ENCODE measurements at regions of chr2 and their contacts with region 1.

Region 1: GRCh38 chr2:10122386-10123280 is at the start of gene RRM2:
- DNase-seq: peak; percentile 95
- ATAC-seq: peak; percentile 79
- H3K4me3 Mint-ChIP-seq: peak within 1 kb of the TSS; percentile 99
- H3K27ac Mint-ChIP-seq: peak within 1 kb of the TSS; percentile 94
- H3K4me1 Mint-ChIP-seq: peaks cover 49% of the 10 kb centered on the region
- H3K27me3 Mint-ChIP-seq: no peaks in the 10 kb centered on the region
- total RNA-seq, gene RRM2: 320 to 355 TPM

Region 2: DNA sequence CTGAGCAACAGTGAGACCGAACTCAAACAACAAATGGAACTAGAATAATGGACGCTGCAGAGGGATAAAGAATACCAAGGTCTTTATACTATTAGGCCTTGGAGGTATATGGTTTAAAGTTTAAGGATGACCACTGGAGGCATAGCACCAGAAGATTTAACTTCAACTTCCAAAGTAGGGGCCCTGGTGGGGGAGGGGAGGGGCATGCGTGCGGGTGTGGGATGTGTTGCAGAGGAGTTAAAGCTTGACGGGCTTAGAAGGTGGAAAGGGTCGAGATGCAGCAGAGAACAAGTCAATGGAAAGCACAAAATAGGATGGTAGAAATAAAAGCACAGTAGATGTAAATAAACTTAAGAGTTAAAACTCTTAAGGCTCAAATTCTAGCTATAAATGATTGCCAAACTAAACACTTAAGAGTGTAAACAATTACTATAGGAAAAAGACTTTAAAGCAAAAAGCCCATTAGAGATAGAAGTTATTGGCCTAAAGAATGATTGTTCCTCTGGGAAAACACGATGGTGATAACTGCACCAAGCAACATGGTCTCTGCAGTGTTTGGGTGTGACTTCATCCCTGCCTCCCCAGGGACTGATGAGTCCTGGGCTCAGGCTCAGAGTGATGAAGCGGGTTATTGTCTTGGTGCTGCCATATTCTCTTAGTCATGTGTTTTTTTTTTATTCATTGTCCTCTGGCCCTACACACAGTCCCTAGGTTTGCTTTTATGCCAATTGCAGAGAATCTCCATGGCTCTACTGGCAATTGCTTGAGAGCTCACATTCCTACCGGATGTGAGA is 12.9 kb after region 1 on chr2:
- POLR2A ChIA-PET with region 1: interaction called, 15 read pairs
- DNase-seq: no peak
- ATAC-seq: no peak
- H3K4me3 Mint-ChIP-seq: no peak overlapping the region
- H3K27ac Mint-ChIP-seq: peak overlapping the region; percentile 50
- H3K4me1 Mint-ChIP-seq: peaks cover 30% of the 10 kb centered on the region
- H3K27me3 Mint-ChIP-seq: no peaks in the 10 kb centered on the region

Region 3: DNA sequence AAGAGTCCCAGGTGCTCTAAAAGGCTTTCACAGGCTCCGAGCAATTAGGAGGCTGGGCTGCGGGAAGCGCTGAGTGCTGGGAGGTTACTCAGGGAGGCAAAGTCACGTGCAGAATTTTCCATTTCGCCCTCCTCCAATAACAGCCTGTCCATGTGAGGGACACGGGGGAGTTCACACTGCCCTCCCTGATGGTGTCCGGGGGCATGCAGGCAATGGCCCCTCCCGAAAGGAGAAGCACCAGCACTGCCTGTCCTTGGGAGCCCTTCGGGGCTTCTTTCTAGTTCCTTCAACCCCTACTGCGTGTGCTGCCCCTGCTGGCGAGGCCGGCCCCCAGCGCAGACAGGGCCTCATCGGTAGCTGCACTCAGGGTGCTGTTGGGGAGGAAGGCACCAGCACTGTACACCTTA is 116.9 kb after region 1 on chr2:
- POLR2A ChIA-PET with region 1: no interaction called
- DNase-seq: no peak
- ATAC-seq: no peak
- H3K4me3 Mint-ChIP-seq: no peak overlapping the region
- H3K27ac Mint-ChIP-seq: no peak overlapping the region
- H3K4me1 Mint-ChIP-seq: peaks cover 3% of the 10 kb centered on the region
- H3K27me3 Mint-ChIP-seq: no peaks in the 10 kb centered on the region

Region 4: DNA sequence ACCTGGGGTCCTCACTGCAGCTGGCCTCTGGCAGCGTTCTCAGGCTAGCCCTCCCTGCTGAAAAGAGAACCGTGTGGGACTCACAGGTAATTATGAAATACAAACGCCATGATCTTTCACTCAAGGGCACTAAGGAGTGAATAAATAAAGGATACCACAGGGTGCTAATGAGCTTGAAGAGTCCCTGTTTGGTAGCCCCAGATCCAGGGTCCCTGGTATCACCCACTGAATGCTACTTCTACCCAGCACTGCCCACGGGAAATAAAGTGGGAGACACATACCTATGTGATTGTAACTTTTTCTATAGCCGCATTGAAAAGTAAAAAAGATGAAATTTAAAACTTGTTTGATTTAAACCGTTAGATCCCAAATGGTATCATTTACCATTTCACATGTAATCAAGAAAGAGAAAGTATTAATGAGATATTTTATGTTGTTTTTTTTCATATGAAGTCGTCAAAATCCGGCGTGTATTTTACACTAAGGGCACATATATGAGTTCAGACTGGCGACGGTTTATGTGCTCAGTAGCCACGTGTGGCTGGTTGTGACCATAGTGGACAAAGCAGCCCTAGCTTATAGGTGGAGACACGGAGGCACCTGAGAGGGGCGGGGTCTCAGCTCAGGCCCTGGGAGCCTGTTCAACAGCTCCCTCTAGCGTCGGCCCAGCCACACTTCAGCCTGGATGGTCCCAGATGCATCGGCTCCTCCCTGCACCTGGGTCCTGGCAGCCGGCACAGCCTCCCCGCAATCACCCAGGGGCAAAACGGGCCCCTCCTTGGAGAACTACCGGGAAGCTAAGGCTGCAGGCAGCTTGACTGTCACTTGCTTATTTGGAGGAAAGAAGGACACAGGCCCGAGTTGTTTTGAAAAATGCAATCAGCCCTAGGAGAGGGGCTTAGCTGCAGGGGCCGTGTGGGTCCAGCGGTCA is 286.3 kb after region 1 on chr2:
- POLR2A ChIA-PET with region 1: interaction called, 13 read pairs
- DNase-seq: peak; percentile 83
- ATAC-seq: peak; percentile 72
- H3K4me3 Mint-ChIP-seq: peak overlapping the region; percentile 86
- H3K27ac Mint-ChIP-seq: peak overlapping the region; percentile 95
- H3K4me1 Mint-ChIP-seq: peaks cover 32% of the 10 kb centered on the region
- H3K27me3 Mint-ChIP-seq: no peaks in the 10 kb centered on the region

Region 5: DNA sequence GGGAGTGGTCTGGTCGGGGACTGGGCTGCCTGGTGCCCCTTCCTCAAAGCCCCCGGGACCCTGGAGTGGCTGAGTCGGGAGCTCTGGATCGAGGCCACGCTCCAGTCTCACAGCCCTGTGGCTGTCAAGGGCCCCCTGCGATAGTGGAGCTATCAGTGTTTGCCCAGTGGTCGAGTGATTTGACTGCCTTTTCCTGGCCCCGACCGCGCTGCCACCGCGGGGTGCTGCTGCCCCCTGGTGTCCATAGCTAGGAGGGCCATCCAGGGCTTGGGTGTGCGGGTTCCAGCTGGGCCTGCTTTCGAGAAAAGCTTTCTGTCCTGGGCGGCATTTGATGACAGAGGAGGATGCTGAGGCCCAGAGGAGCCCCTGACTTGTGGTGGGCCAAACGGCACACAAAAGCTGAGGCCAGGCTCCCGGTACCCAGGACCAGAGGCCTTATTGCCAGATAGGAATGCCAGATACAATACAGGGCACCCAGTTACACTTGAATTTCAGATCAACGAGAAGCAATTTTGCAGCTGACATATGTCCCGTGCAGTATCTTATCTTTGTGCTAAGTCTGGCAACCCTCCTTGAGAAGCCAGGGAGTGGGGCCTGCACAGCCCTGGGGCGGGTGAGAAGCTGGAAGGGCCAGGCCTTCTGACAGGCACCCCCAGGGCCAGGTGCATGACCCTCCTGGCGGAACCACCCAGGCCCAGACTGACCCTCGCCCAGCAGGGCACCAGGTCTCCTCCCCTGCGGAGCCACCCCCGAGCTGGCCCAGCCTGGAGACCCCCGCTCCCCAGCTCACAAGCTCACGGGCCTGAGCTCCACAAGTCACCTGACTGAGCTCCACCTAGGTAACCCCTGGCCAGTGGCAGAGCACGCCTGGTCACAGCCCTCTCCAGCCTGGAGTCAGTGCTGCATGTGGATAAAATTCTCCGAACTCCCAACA is 312.5 kb after region 1 on chr2:
- POLR2A ChIA-PET with region 1: interaction called, 27 read pairs
- DNase-seq: peak; percentile 84
- ATAC-seq: peak; percentile 46
- H3K4me3 Mint-ChIP-seq: no peak overlapping the region
- H3K27ac Mint-ChIP-seq: no peak overlapping the region
- H3K4me1 Mint-ChIP-seq: peaks cover 18% of the 10 kb centered on the region
- H3K27me3 Mint-ChIP-seq: peaks cover 6% of the 10 kb centered on the region